ENCODE measurements at regions of chr4 and their contacts with region 1.

Region 1: DNA sequence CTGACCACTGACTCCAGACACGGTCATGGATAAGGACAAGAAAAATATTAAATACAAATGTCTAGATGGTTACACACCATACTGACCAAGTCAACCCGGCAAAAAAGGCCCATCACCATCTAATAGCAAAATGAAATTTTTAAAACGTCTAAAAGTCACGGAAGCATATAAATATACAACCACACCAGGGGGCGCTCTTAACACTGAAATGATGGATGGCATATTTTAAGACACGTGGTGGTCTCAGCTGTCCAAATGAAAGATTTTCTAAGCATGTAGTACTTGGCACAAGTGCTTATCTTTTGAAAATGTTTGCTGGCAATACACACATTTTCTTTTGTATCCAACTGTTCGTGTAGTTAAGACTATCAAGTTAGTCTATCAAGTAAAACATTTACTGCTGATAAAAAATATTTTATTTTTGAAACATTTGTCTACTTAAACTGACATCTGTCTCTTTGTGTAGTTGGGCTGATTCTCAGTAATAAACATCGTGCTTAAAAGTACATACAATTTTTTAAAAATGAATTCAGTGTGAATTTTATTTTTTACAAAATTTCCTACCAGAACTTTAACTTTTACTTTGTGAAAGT is 64.6 kb downstream of the COX7B2 start:
- DNase-seq: peak; percentile 65
- ATAC-seq: no peak
- H3K4me3 Mint-ChIP-seq: no peak overlapping the region
- H3K27ac Mint-ChIP-seq: no peak overlapping the region
- H3K4me1 Mint-ChIP-seq: no peaks in the 10 kb centered on the region
- H3K27me3 Mint-ChIP-seq: no peaks in the 10 kb centered on the region

Region 2: DNA sequence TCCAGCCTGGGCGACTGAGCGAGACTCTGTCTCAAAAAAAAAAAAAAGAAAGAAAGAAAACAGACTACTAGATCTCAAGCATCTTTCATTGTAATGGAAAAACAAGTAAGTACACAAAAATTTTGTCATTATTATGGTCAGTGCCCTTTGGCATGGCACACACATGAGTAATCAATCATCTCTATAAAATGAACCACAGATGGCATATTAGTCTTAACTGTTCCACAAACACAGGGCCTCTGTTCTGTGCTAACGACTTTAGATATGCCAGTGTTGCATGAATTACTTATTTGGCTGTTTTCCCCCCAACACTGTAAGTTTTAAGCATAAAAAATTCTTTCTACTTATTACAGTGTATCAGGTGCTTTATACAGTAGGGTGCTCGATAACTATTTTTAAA is 25.8 kb before region 1 on chr4:
- CTCF ChIA-PET with region 1: no interaction called
- POLR2A ChIA-PET with region 1: no interaction called
- intact Hi-C with region 1: no loop called
- DNase-seq: no peak
- ATAC-seq: no peak
- H3K4me3 Mint-ChIP-seq: no peak overlapping the region
- H3K27ac Mint-ChIP-seq: no peak overlapping the region
- H3K4me1 Mint-ChIP-seq: no peaks in the 10 kb centered on the region
- H3K27me3 Mint-ChIP-seq: peaks cover 2% of the 10 kb centered on the region

Region 3: DNA sequence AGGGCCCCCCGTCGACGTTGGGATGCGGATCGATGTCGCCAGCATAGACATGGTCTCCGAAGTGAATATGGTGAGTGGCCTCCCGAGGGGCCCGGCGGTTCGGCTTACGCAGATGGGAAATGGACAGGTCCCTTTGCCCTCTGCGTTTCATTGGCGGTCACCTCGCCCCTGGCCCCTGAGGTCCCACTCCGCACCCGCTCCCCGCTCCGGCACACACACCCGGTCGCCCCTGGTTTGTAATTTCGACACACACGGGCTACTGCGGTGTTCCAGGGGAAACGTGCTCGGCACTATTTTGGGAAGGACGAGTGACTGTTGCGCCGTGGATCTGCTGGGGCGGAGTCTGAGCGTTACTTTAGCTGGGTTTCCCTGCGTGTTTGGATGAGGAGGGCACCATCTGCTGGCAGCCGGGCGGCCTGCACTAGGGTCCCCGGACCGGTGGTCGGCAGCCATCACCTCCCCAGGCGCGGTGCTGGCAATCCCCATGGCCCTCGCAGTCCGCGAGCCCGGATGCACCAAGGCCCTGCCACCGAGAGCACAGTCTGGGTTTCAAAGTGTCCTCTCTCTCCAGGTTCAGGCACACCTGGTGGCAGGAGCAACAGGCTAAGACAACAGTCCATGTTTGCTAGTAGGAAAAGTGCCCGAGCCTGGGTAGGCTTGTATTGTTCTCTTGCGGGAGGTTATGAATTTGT is 188.1 kb after region 1 on chr4:
- CTCF ChIA-PET with region 1: interaction called, 3 read pairs
- POLR2A ChIA-PET with region 1: no interaction called
- intact Hi-C with region 1: loop called (anchors 1 to 5 kb)
- DNase-seq: peak; percentile 67
- ATAC-seq: peak; percentile 81
- H3K4me3 Mint-ChIP-seq: peak overlapping the region; percentile 49
- H3K27ac Mint-ChIP-seq: no peak overlapping the region
- H3K4me1 Mint-ChIP-seq: peaks cover 15% of the 10 kb centered on the region
- H3K27me3 Mint-ChIP-seq: peaks cover 31% of the 10 kb centered on the region

Region 4: GRCh38 chr4:47122592-47123291 is 278.3 kb after region 1 on chr4:
- CTCF ChIA-PET with region 1: interaction called, 15 read pairs
- POLR2A ChIA-PET with region 1: no interaction called
- intact Hi-C with region 1: loop called (anchors 1 kb)
- DNase-seq: peak; percentile 61
- ATAC-seq: peak; percentile 75
- H3K4me3 Mint-ChIP-seq: no peak overlapping the region
- H3K27ac Mint-ChIP-seq: no peak overlapping the region
- H3K4me1 Mint-ChIP-seq: no peaks in the 10 kb centered on the region
- H3K27me3 Mint-ChIP-seq: peaks cover 8% of the 10 kb centered on the region

Region 5: DNA sequence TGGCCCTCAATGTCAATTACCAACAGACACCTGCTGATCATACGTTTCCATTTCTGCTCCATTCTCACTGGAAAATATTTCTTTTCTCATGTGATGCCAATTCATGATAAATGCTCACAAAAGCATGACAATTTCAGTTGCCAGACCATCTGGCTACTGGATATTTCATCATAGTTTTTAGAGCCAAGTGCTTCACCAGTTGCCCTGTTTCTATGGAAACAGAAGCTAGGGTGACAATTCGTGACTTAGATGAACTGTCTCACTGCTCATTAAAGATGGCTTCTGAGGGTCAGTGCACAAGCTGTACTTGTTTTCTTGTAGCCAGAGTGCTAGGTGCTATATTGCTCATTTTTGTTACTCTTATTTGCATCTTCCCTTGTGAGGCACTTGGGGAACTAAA is 434.2 kb after region 1 on chr4:
- CTCF ChIA-PET with region 1: no interaction called
- POLR2A ChIA-PET with region 1: no interaction called
- intact Hi-C with region 1: no loop called
- DNase-seq: no peak
- ATAC-seq: no peak
- H3K4me3 Mint-ChIP-seq: no peak overlapping the region
- H3K27ac Mint-ChIP-seq: no peak overlapping the region
- H3K4me1 Mint-ChIP-seq: no peaks in the 10 kb centered on the region
- H3K27me3 Mint-ChIP-seq: peaks cover 6% of the 10 kb centered on the region

Measured in activated CD4-positive, alpha-beta T cell treated with anti-CD3 and anti-CD28 coated beads for 36 hours (primary cell).